ENCODE measurements at regions of chr1 and their contacts with region 1.

Region 1: DNA sequence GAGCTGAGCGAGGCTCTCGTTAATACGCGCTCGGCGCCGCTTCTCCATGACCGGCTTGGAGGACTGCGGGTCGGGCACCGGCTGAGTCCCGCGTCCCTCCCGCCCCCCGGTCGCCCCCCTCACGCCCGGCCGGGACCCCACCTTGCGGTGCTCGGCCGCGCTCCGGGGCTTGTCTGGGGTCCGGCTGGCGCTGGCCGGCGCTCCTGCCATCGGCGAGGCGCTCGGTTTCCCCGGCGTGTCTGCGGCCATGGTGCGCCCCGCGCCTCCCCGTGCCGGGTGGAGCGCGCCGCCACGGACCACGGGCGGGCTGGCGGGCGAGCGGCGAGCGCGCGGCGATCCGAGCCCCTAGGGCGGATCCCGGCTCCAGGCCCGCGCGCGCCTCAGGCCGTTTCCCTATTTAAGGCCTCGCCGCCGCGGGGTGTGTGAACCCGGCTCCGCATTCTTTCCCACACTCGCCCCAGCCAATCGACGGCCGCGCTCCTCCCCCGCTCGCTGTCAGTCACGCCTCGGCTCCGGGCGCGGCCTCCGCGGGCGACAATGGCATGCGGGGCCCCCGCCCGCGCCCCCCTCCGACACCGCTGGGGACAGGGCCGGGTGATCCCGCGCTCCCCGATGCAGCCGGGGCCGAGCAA is at the start of gene HES4:
- DNase-seq: peak; percentile 89
- H3K27ac ChIP-seq: peak within 1 kb of the TSS; percentile 93
- CTCF ChIP-seq: no peak

Region 2: DNA sequence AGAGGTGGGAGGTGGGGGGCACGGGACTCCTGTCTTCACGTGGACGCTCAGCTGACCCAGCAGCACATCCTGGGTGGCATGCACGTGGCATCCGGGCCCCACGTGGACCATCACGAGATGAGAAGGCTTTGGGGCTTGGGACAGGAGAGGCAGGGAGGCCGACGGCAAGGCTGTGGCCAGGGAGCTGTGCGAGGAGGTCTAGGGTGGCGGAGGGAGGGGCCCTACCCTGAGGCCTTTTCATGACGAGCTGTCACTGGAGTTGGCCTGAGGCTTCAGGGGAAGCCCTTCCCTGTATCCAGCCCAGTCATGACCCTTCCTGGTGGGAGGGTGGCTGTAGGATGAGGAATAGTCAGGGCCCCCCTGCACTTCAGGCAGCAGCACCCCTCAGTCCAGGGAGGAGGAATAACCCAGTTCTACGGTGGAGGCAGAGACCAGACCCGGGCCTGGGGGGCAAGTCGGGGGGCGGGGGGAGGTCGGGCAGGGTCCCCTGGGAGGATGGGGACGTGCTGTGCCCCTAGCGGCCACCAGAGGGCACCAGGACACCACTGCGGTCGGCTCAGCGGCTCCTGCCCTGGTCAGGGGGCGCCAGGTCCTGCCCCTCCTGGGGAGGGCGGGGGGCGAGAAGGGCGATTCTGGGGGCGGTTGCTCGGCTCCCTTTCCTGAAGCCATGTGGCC is 15.9 kb before region 1 on chr1:
- CTCF ChIA-PET with region 1: interaction called, 17 read pairs
- POLR2A ChIA-PET with region 1: interaction called, 4 read pairs
- DNase-seq: peak; percentile 52
- H3K27ac ChIP-seq: peak overlapping the region; percentile 7; the same call in 1 of the 2 replicates
- CTCF ChIP-seq: peak; percentile 93

Region 3: DNA sequence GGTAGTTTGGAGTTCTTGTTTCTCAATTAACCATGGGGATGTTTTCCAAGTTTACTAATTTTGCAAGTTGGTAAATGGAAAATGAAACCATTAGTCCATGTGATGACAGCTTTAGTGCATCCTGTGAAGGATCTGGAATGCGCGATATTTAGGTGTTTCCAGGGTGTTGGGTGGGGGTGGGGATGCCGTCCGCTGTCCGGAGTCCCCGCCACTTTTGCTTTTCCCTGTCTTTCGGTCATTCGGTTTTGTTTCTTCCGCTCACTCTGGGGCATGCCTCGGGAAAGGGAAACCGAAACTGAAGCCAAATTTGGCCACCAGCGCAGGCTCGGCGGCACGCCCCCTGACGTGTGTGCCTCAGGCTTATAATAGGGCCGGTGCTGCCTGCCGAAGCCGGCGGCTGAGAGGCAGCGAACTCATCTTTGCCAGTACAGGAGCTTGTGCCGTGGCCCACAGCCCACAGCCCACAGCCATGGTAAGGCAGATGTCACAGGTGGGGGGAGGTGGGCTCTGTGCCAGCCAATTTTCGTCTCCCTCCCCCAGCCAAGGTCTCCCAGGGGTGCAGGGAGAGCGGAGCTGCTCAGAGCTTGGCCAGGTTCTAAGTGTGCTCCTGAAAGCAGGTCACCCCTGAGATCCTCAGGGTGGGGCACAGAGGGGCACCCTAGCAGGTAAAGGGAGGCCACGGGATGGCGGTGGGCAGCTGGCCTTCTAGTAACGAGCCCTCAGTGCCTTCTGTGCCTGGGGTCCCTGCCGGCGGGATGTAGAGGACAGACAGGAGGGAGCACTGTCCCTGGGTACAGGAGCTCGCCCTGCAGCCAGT is 13.5 kb after region 1 on chr1 and contains the start of gene ISG15:
- CTCF ChIA-PET with region 1: interaction called, 26 read pairs
- POLR2A ChIA-PET with region 1: no interaction called
- DNase-seq: peak; percentile 56
- H3K27ac ChIP-seq: peak within 1 kb of the TSS; percentile 84
- CTCF ChIP-seq: no peak

Region 4: GRCh38 chr1:1024771-1025451 is 25.1 kb after region 1 on chr1:
- CTCF ChIA-PET with region 1: interaction called, 16 read pairs
- POLR2A ChIA-PET with region 1: no interaction called
- DNase-seq: peak; percentile 88
- H3K27ac ChIP-seq: peak overlapping the region; percentile 98
- CTCF ChIP-seq: no peak

Region 5: DNA sequence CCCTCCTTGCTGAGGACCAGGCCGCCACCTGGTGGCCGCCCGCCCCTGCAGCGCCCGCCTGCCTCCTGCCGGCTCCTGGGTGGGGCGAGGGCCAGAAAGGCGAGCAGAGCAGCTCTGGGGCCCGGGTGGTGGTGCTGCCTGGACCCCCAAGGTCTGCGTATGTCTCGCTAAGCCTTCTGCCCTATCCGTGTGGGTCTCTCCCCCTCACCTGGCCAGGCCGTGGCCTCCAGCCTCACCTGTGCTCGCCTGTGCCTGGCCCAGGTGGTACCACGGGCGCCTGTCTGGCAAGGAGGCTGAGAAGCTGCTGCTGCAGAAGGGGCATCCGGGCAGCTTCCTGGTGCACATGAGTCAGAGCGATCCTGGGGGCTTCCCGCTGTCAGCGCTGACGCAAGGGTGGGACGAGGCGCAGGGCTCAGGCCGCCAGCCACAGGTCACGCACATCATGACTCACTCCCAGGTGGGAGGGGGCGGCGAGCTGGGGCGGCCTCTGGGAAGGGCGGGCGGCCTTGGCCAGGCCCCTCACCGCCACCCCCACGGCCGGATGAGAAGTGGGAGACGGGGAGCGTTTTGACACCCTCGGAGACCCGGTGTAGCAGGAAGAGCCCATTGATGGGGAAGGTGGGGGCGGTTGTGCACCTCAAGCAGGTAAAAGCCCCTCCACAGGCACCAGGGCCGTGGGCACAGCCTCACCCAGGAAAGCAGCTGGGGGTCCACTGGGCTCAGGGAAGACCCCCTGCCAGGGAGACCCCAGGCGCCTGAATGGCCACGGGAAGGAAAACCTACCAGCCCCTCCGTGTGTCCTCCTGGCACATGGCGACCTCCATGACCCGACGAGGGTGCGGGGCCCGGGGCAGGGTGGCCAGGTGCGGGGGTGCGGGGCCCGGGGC is 64.3 kb after region 1 on chr1:
- CTCF ChIA-PET with region 1: interaction called, 12 read pairs
- POLR2A ChIA-PET with region 1: no interaction called
- DNase-seq: peak; percentile 58
- H3K27ac ChIP-seq: peak overlapping the region; percentile 78
- CTCF ChIP-seq: peak; percentile 94

Measured in RWPE1 (cell line).